ENCODE measurements at regions of chr2 and their contacts with region 1.

Region 1: DNA sequence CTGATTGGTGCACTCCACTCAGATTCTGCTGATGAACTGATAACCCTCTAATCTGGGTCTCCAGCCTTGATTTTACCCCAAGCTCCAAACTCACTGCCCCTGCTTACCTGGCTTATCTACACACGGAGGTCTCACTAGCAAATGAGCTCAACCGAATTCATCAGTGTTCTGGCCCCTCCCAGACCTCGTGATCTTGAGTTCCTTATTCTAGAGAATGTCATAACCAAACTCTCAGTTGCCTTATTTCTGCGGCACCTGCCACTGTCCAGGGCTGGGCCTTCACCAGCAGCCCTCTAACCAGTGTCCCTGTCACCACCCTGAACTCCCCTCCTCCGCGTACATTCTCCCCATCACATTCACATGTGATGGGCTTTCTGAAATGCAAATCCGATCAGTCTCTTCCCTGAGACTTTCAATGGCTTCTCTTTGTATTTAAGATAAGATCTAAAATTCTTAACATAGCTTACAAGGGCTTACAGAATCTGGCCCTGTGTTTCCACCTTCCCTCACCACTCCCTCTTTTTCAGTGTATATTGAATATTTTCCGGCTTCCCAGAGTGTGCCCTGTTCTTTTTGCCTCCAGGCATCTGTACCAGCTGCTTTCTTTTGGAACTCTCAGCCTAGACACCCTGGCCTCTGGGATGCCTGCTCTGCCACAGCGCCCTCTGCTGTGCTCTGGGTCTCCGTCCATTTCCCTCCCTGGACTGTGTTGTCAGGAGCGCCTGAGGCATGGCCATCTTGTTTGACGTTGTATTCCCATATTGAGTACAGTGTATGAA is 31.1 kb downstream of the NAB1 start:
- DNase-seq: peak; percentile 53
- ATAC-seq: peak; percentile 77
- H3K4me3 Mint-ChIP-seq: no peak overlapping the region
- H3K27ac Mint-ChIP-seq: no peak overlapping the region
- H3K4me1 Mint-ChIP-seq: peaks cover 27% of the 10 kb centered on the region
- H3K27me3 Mint-ChIP-seq: no peaks in the 10 kb centered on the region

Region 2: GRCh38 chr2:190382851-190383250 is 297.2 kb before region 1 on chr2:
- CTCF ChIA-PET with region 1: interaction called, 20 read pairs
- POLR2A ChIA-PET with region 1: no interaction called
- DNase-seq: peak; percentile 62
- ATAC-seq: peak; percentile 85
- H3K4me3 Mint-ChIP-seq: no peak overlapping the region
- H3K27ac Mint-ChIP-seq: no peak overlapping the region
- H3K4me1 Mint-ChIP-seq: no peaks in the 10 kb centered on the region
- H3K27me3 Mint-ChIP-seq: peaks cover 3% of the 10 kb centered on the region

Region 3: GRCh38 chr2:190649035-190649797 is 30.8 kb before region 1 on chr2 and contains the start of gene NAB1:
- CTCF ChIA-PET with region 1: interaction called, 39 read pairs
- POLR2A ChIA-PET with region 1: interaction called, 4 read pairs
- DNase-seq: peak; percentile 60
- ATAC-seq: peak; percentile 79
- H3K4me3 Mint-ChIP-seq: peak within 1 kb of the TSS; percentile 92
- H3K27ac Mint-ChIP-seq: peak within 1 kb of the TSS; percentile 75
- H3K4me1 Mint-ChIP-seq: peaks cover 18% of the 10 kb centered on the region
- H3K27me3 Mint-ChIP-seq: peaks cover 10% of the 10 kb centered on the region
- total RNA-seq, gene NAB1: 23.4 to 23.7 TPM

Region 4: GRCh38 chr2:190664240-190664639 is 15.8 kb before region 1 on chr2:
- CTCF ChIA-PET with region 1: interaction called, 11 read pairs
- POLR2A ChIA-PET with region 1: interaction called, 5 read pairs
- DNase-seq: no peak
- ATAC-seq: no peak
- H3K4me3 Mint-ChIP-seq: no peak overlapping the region
- H3K27ac Mint-ChIP-seq: no peak overlapping the region
- H3K4me1 Mint-ChIP-seq: peaks cover 3% of the 10 kb centered on the region
- H3K27me3 Mint-ChIP-seq: no peaks in the 10 kb centered on the region

Region 5: GRCh38 chr2:190693533-190694232 is 13.7 kb after region 1 on chr2:
- CTCF ChIA-PET with region 1: interaction called, 10 read pairs
- POLR2A ChIA-PET with region 1: no interaction called
- DNase-seq: no peak
- ATAC-seq: no peak
- H3K4me3 Mint-ChIP-seq: no peak overlapping the region
- H3K27ac Mint-ChIP-seq: no peak overlapping the region
- H3K4me1 Mint-ChIP-seq: peaks cover 5% of the 10 kb centered on the region
- H3K27me3 Mint-ChIP-seq: no peaks in the 10 kb centered on the region